Sciatic nerve (tissue), 2 donors: ENCODE measurements at regions of chr2 and their contacts with region 1.

Region 1: DNA sequence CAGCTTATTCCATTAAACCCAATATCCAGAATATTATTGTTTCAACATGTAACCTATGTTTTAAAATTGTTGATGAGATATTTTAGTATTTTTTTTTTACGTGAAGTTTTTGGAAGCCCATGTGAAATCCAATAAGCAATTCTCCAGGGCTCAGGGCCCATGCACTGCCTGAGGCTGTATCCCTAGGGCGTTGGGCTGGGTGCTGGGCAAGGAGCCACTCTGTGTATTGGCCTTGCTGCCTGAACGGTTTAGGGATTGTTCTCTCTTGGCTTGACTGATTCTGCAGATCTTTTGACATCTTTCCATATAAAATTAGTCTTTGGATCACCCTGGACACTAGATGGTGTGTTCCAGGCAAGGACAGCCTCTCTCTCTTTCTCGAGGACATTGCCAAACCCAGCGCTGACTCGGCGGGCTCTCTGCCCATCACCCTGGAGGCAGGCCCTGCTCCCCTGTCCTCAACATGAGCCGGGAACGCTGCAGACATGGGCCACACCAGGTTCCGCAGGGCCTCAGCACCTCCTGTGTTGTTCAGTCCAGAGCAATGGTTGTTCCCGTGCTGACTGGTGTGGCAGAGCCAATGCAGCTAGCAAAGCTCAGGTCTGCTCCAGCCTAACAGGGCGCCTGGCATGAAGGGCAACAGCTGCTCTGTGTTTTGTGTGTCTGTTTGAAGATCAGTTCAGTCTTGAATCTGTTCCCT is 163.0 kb downstream of the SEPTIN10 start:
- DNase-seq: peak; percentile 52
- ATAC-seq: peak; percentile 29

Region 2: DNA sequence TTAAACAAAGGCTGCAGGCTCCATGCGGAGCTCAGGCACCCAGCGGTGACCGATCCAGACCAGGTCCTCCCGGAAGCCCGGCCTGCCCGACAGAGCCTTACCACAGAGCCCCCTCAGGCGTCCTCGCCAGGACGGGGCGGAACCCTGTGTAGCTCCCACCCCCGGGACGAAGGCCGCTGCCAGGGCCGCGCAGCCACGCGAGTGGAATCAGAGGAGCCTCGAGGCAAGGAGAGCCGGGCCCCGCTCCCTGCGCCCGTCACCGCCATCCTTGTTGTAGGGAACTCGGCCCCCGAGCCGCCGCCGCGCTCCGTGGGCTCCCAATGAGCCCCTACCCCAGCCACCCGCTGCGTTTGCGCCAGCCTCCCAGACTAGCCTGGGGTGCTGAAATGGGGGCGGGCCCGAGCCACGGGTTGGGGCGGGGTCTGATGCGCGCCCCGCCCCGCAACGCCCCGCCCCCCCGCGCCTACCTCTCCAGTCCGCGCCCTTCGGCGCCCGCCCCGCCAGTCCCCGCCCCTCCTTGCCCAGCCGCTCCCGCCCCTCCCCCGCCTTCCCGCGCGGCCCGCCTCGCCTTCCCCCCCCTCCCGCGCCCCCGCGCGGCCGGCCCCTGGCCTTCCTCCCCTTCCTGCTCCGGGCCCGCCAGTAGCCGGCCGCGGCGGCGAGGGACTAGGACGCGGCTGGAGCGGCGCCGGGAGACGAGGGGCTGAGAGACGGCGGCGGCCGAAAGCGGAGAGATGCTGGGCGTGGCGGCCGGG is 916.7 kb before region 1 on chr2 and contains the start of gene LIMS1:
- intact Hi-C with region 1: no loop called
- DNase-seq: peak; percentile 95
- ATAC-seq: peak; percentile 98
- total RNA-seq, gene LIMS1: 50.2 TPM

Region 3: DNA sequence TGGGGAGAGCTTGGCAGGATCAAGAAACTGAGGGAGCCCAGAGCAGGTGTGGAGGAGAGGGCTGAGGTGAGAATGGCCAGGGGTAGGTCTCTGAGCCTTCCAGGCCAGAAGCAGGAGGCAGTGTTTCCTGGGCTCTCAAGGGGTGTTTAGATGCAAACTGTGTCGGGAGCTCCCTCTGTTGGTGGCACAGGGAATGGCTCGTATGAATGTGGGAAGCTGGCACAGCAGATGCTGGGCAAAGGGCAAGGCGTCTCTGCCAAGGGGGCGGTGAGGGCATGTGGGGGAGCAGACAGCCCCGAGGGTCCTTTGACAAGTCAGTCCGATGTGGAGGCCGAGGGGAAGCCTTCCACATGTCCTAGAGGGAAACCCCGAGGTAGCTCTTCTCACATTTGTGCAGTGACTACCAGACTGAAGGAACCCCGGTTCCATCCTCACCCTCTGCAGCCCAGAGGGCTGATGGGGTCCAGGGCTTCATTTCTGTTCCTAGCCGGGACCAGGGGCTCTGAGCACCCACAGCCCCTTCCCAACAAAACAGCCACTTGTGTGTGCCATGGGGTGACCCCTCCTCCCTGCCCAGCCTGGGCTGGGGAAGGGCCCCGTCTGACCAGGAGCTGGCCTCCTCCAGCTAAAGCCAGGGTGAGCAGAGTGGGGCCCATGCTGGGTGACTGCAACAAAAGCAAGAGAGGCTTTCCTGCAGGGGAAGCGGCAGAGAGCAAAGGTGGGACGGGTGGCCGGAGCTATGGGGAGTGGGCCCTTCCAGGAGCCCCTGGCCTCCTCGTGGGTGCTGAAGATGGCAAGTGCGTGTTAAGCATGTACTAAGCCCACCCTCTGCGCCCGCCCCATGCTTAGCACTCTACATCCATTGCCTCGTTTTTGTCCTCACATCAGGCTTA is 59.7 kb after region 1 on chr2:
- intact Hi-C with region 1: loop called (anchors 2 kb)
- DNase-seq: peak; percentile 88
- ATAC-seq: peak; percentile 67